CD14-positive monocyte (primary cell): ENCODE measurements at regions of chr1 and their contacts with region 1.

Region 1: DNA sequence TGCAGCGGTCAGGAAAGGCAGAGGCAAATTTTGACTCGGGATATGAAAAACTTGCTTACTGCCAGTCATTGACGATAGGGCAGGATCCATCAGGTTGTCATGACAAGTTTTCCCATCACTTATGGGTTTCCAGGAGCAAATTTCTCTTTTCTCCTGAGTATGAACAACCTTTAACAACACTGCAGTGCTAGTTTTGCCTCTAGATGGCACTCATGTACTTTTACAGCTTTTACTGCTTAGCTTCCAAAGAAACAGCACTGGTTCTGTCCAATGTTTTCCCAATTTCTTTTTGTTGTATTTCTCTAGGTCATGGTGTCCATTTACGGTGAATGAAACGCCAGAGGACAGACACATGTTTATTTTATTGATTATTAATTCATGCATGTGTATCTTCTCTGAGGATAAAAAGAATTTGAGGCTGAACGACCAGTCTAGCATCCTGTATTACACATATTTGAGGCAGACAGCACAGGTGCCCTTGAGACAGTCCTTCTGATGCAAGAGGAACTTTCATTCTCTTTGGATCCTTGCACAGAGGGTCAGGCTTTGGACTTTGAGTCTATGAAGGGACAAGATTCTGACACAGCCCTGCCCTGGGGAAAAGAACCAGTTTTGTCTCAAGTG is 112.3 kb upstream of the TRABD2B start:
- DNase-seq: peak; percentile 15 to 58 (median 50)
- H3K4me3 ChIP-seq: no peak overlapping the region
- H3K4me3 Mint-ChIP-seq: no peak overlapping the region
- H3K27ac ChIP-seq: no peak overlapping the region
- H3K27ac Mint-ChIP-seq: no peak overlapping the region
- H3K4me1 ChIP-seq: no peaks in the 10 kb centered on the region
- H3K4me1 Mint-ChIP-seq: no peaks in the 10 kb centered on the region
- H3K27me3 ChIP-seq: peaks cover 2 to 3% of the 10 kb centered on the region in 2 donors
- H3K27me3 Mint-ChIP-seq: peaks cover 8 to 13% (median 11%) of the 10 kb centered on the region in 3 donors
- CTCF ChIP-seq: peak; percentile 87

Region 2: GRCh38 chr1:47997289-47998200 is 112.0 kb before region 1 on chr1 and contains the start of gene TRABD2B:
- intact Hi-C with region 1: no loop called
- DNase-seq: peak; percentile 36 to 54 (median 40)
- H3K4me3 ChIP-seq: peak within 1 kb of the TSS in 1 of 3 experiments; percentile 18
- H3K4me3 Mint-ChIP-seq: peak within 1 kb of the TSS; percentile 80 to 84
- H3K27ac ChIP-seq: no peak within 1 kb of the TSS
- H3K27ac Mint-ChIP-seq: no peak within 1 kb of the TSS
- H3K4me1 ChIP-seq: peaks cover 2 to 5% of the 10 kb centered on the region in 2 donors
- H3K4me1 Mint-ChIP-seq: peaks cover 2% of the 10 kb centered on the region
- H3K27me3 ChIP-seq: peaks cover 35 to 52% of the 10 kb centered on the region in 2 donors
- H3K27me3 Mint-ChIP-seq: peaks cover 54 to 74% (median 56%) of the 10 kb centered on the region in 3 donors
- CTCF ChIP-seq: peak; percentile 95
- polyA plus RNA-seq, gene TRABD2B: not detected

Region 3: GRCh38 chr1:48127735-48128685 is 18.5 kb after region 1 on chr1:
- intact Hi-C with region 1: no loop called
- DNase-seq: no peak
- H3K4me3 ChIP-seq: no peak overlapping the region
- H3K4me3 Mint-ChIP-seq: no peak overlapping the region
- H3K27ac ChIP-seq: no peak overlapping the region
- H3K27ac Mint-ChIP-seq: no peak overlapping the region
- H3K4me1 ChIP-seq: no peaks in the 10 kb centered on the region
- H3K4me1 Mint-ChIP-seq: no peaks in the 10 kb centered on the region
- H3K27me3 ChIP-seq: peaks cover 0 to 9% of the 10 kb centered on the region in 2 donors
- H3K27me3 Mint-ChIP-seq: peaks cover 1 to 20% (median 8%) of the 10 kb centered on the region in 3 donors
- CTCF ChIP-seq: no peak

Region 4: DNA sequence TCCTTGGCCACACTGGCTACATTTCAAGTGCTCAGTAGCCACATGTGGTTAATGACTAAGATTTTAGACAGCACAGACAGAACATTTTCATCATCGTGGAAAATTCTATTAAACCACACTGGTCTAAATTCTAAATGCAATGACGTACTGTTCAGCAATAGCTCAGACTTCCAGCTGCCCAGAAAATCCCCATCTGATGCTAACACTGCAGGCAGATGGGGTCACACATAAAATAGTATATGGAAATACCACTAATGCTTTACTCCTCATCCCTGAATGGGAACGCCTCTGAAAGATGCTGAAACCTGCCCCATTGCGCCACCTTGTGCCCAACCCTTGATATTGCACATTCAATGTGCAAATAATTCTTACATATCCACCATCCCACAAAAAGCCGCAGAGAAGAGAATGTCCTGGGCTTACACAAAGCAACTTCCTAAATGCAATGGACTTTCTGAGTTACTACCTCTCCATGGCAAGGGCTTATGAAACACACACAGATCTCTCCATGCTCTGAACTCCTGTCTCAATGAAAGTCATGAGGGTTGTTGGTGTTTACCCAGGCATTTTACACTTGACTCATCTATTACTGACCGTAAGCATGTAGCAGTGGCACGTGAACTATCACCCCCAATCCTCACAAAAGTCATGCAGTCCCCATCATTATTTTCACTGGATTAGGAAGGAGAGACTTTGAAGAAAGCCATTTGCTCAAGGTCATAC is 92.7 kb after region 1 on chr1:
- intact Hi-C with region 1: loop called (anchors 2 to 5 kb)
- DNase-seq: peak; percentile 46 to 72 (median 58)
- H3K4me3 ChIP-seq: no peak overlapping the region
- H3K4me3 Mint-ChIP-seq: no peak overlapping the region
- H3K27ac ChIP-seq: no peak overlapping the region
- H3K27ac Mint-ChIP-seq: no peak overlapping the region
- H3K4me1 ChIP-seq: no peaks in the 10 kb centered on the region
- H3K4me1 Mint-ChIP-seq: no peaks in the 10 kb centered on the region
- H3K27me3 ChIP-seq: peaks cover 0 to 3% of the 10 kb centered on the region in 2 donors
- H3K27me3 Mint-ChIP-seq: peaks cover 5 to 9% (median 6%) of the 10 kb centered on the region in 3 donors
- CTCF ChIP-seq: peak; percentile 80

Region 5: GRCh38 chr1:48498096-48498791 is 388.7 kb after region 1 on chr1:
- intact Hi-C with region 1: loop called in 1 of 2 experiments (anchors 5 kb)
- DNase-seq: peak; percentile 50 to 77 (median 68)
- H3K4me3 ChIP-seq: no peak overlapping the region
- H3K4me3 Mint-ChIP-seq: peak overlapping the region; percentile 27 to 49
- H3K27ac ChIP-seq: no peak overlapping the region
- H3K27ac Mint-ChIP-seq: peak overlapping the region in 1 of 7 donors; percentile 63
- H3K4me1 ChIP-seq: peaks cover 0 to 5% of the 10 kb centered on the region in 2 donors
- H3K4me1 Mint-ChIP-seq: peaks cover 6% of the 10 kb centered on the region
- H3K27me3 ChIP-seq: no peaks in the 10 kb centered on the region
- H3K27me3 Mint-ChIP-seq: peaks cover 0 to 4% (median 1%) of the 10 kb centered on the region in 3 donors
- CTCF ChIP-seq: peak; percentile 99